IMR-90 (cell line): ENCODE measurements at regions of chr15 and their contacts with region 1.

Region 1: GRCh38 chr15:34147371-34148140 is 45.7 kb downstream of the PGBD4 start:
- DNase-seq: peak; percentile 24
- ATAC-seq: no peak; the same call in 1 of the 2 replicates
- H3K4me3 ChIP-seq: no peak overlapping the region
- H3K27ac ChIP-seq: no peak overlapping the region
- H3K4me1 ChIP-seq: peaks cover 4% of the 10 kb centered on the region; the same call in 1 of the 2 replicates
- H3K27me3 ChIP-seq: no peaks in the 10 kb centered on the region
- CTCF ChIP-seq: no peak
- POLR2A ChIP-seq: no peak
- RAD21 ChIP-seq: no peak

Region 2: GRCh38 chr15:34188711-34189110 is 41.2 kb after region 1 on chr15:
- CTCF ChIA-PET with region 1: no interaction called
- POLR2A ChIA-PET with region 1: no interaction called
- dilution Hi-C with region 1: no loop called
- in situ Hi-C with region 1: no loop called
- intact Hi-C with region 1: loop called (anchors 10 kb)
- DNase-seq: no peak
- ATAC-seq: no peak
- H3K4me3 ChIP-seq: no peak overlapping the region
- H3K27ac ChIP-seq: no peak overlapping the region
- H3K4me1 ChIP-seq: no peaks in the 10 kb centered on the region
- H3K27me3 ChIP-seq: no peaks in the 10 kb centered on the region
- CTCF ChIP-seq: no peak
- POLR2A ChIP-seq: no peak
- RAD21 ChIP-seq: no peak